ENCODE measurements at regions of chr22 and their contacts with region 1.

Region 1: DNA sequence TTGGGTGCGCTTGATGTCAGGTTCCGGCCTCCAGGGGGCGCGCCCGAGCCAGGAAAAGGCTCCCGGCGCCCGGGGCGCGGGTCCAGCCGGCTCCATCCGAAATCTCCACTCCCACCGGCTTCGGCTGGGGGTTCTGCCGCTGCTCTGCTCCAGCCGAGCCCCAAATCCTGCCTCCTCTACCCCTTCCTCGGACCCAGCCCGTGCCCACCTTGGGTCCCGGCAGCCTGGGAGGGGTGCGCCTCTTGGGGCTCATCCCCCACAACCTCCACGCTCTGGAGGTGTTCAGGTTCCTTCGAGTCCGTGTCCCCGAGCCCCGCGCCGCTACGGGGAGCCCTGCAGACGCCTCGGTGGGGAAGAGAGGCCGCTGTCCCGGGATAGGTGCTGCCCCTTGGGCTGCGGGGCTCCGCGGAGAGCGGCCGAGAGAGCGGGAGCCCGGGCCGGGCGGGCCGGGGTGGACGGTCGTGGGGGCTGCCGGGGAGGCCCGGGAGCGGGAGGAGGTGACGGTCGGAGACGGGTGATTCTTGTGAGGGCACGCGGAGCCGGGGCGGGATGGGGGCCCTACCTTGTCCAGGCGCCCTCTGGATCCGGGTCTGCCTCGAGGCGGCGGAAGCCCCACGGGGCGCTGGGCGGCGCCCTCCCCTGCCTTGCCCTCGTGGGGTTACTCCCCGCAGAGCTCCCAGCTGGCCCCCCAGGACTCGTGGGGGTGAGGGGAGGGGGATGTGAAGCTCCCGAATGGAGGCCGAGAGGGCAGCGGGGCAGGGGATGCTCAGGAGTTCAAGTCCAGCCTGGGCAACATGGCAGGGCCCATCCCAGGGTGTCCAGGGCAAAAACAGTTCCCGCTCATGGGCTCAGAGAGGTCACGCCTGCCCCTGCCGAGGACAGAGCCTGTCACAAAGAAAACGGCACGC is 13.2 kb upstream of the CYB5R3 start:
- DNase-seq: peak; percentile 90
- ATAC-seq: peak; percentile 95 to 97

Region 2: DNA sequence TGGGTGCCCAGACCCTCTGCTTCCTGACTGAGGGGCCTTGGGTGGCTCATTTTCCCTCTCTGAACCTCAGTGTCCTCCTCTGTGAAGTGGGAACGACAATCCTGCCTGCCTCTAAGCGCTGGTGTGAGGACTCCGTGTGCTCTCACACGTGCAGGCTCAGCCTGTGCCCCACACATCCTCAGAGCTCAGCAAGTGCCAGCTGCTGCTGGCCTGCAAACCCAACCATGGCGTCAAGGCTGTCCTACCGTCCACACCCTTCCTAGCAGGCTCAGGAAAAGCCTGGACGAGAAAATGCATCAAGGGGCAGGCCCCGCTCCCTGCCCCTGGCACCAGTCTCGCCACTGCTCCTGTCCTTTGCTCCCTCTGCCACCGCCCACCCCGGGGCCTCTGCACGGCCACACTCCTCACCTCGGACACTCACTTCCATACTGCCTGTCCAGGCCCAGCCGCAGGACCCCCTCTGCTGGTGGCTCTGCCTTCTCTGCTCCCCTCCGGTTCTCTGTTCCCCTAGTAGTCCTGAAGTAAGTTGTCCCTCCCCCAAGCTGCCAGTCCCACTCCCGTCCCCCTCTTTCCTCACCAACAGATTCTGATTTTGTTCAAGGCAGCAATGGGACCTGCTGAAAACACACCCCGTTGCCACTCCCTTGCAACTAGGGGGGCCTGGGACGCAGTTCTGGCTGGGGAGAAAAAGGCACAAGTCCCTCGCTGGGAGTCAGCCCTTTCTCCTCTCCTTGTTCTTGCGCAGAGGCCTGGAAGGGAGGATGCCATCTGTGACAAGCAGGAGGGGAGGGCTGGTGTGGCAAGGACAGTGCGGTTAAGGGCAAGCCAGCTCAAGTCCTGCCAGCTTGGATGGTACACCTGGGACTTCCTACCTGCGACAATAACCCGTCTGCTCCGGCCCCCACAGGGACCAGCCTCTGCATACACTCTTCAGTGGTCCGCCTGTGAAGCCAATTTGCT is 132.5 kb after region 1 on chr22:
- intact Hi-C with region 1: loop called in 1 of 2 experiments (anchors 10 kb)
- DNase-seq: no peak
- ATAC-seq: no peak

Region 3: GRCh38 chr22:42820066-42820763 is 157.8 kb after region 1 on chr22:
- intact Hi-C with region 1: loop called in 1 of 2 experiments (anchors 2 kb)
- DNase-seq: no peak
- ATAC-seq: no peak